ENCODE measurements at regions of chr15 and their contacts with region 1.

Region 1: GRCh38 chr15:101251830-101252820 is at the start of gene CHSY1:
- DNase-seq: peak; percentile 91
- H3K4me3 ChIP-seq: peak within 1 kb of the TSS; percentile 70 to 90 (median 76)
- H3K27ac ChIP-seq: peak within 1 kb of the TSS; percentile 67
- H3K4me1 ChIP-seq: peaks cover 24% of the 10 kb centered on the region
- H3K27me3 ChIP-seq: no peaks in the 10 kb centered on the region
- CTCF ChIP-seq: peak in 1 of 2 donors; percentile 30
- total RNA-seq, gene CHSY1: 37.9 to 40.2 TPM

Region 2: DNA sequence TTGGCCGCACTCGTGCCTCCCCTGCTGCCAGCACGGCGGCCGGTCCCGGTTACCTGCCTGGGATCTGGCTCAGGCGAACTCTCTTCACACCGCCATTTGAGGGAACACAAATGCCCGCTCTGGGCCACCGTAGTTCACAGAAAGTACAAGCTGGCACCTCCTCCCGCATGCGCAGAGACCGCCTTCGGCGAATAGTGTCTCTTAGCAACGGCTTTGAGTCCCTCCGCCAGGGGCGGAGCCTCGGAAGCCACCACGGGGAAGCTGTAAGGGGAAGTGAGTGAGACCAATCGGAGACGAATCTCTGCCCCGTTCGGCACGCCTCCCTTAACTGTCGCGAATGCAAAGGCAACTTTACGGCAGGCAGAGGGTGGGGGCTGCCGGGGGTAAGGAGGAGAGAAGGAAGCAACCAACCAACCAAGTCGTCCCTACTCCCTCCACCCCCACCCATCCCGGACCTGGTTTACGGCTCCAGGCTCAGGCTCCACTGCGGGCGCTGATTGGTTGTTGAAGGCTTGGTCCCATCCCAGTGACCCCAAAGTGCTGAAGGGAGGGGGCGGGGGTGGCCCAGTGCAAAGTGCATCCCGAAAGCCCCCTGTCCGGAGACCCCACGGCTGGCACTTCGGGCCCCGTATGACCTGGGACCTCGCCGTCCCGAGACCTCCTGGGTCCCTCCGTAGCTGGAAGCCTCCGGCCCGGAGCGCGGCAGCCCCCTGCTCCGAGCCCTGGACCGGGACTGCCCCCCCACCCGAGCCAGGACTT is 649.9 kb before region 1 on chr15 and contains the starts of genes ASB7 and LINS1:
- CTCF ChIA-PET with region 1: no interaction called
- dilution Hi-C with region 1: no loop called
- in situ Hi-C with region 1: loop called (anchors 25 kb)
- intact Hi-C with region 1: no loop called
- DNase-seq: peak; percentile 100
- H3K4me3 ChIP-seq: peak within 1 kb of the TSS; percentile 85 to 98 (median 97)
- H3K27ac ChIP-seq: peak within 1 kb of the TSS; percentile 93
- H3K4me1 ChIP-seq: peaks cover 14% of the 10 kb centered on the region
- H3K27me3 ChIP-seq: no peaks in the 10 kb centered on the region
- CTCF ChIP-seq: no peak
- total RNA-seq, gene ASB7: 15.4 to 20.7 TPM
- total RNA-seq, gene LINS1: 19.0 to 26.3 TPM

Region 3: DNA sequence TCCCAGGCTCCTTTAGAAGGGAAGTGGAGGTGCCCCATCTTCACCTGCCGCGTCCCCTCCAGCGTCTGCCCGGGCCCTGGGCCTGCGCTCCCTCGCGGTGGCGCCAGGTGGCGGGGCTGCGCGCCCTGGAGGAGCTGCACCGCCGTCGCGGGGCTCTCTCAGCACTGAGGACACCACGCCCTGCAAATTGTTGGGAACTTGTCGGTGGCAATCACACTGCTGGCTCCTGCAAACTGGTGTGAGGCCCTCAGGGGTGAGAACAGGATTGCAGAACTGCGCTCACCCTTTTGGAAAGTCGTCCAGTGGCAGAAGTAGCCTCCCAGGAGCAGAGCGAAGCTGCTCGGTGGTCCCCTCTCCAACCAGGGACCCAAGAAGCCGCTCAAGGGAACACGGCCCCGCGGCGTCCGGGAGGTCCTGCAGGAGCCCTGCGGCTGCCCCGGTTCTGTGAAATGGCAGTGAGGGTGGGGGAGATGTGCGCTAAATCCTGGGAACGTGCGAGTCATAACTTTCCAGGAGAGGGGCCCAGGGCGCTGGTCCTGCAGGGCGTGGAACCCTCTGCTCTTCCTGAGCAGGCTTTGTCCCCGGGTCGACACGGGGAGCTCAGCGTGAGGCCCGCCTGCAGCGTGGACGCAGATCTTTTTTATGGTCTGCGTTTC is 334.0 kb before region 1 on chr15:
- CTCF ChIA-PET with region 1: no interaction called
- dilution Hi-C with region 1: no loop called
- in situ Hi-C with region 1: loop called (anchors 10 to 25 kb)
- intact Hi-C with region 1: loop called (anchors 5 kb)
- DNase-seq: peak; percentile 77
- H3K4me3 ChIP-seq: peak overlapping the region; percentile 64 to 72 (median 67)
- H3K27ac ChIP-seq: peak overlapping the region; percentile 48
- H3K4me1 ChIP-seq: peaks cover 39% of the 10 kb centered on the region
- H3K27me3 ChIP-seq: no peaks in the 10 kb centered on the region
- CTCF ChIP-seq: peak; percentile 83 to 94

Region 4: GRCh38 chr15:101201406-101202174 is 50.5 kb before region 1 on chr15:
- CTCF ChIA-PET with region 1: no interaction called
- dilution Hi-C with region 1: no loop called
- in situ Hi-C with region 1: no loop called
- intact Hi-C with region 1: loop called (anchors 1 kb)
- DNase-seq: peak; percentile 94
- H3K4me3 ChIP-seq: no peak overlapping the region
- H3K27ac ChIP-seq: no peak overlapping the region
- H3K4me1 ChIP-seq: peaks cover 26% of the 10 kb centered on the region
- H3K27me3 ChIP-seq: no peaks in the 10 kb centered on the region
- CTCF ChIP-seq: no peak

Region 5: DNA sequence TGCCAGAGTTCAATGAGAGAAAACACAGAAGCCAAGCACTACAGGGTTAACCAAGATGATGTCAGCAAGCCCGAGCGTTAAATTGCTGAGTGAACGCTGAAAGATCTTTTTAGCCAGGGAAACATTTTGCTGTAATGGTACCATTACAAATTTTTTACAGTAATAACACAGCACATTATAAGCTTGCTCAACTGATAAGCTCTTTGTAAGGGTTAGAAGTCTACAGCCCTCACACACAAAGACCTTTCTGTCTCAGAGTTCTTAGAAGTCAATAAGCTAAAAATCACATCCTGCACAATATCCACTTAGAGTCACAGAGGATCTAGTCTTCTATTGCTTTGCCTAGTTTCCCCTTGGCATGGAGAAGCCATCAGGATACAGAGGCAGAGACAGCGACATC is 30.2 kb before region 1 on chr15:
- CTCF ChIA-PET with region 1: no interaction called
- dilution Hi-C with region 1: no loop called
- in situ Hi-C with region 1: no loop called
- intact Hi-C with region 1: loop called (anchors 5 kb)
- DNase-seq: no peak
- H3K4me3 ChIP-seq: no peak overlapping the region
- H3K27ac ChIP-seq: no peak overlapping the region
- H3K4me1 ChIP-seq: no peaks in the 10 kb centered on the region
- H3K27me3 ChIP-seq: no peaks in the 10 kb centered on the region
- CTCF ChIP-seq: no peak

Measured in mammary epithelial cell (primary cell).